CD14-positive monocyte (primary cell): ENCODE measurements at regions of chr14 and their contacts with region 1.

Region 1: GRCh38 chr14:92659765-92660561 is 88.5 kb downstream of the LGMN start:
- DNase-seq: peak; percentile 90 to 96 (median 94)
- H3K4me3 ChIP-seq: peak overlapping the region in 2 of 3 experiments; percentile 6 to 96
- H3K4me3 Mint-ChIP-seq: peak overlapping the region; percentile 56 to 67
- H3K27ac ChIP-seq: peak overlapping the region; percentile 90 to 98
- H3K27ac Mint-ChIP-seq: peak overlapping the region; percentile 100
- H3K4me1 ChIP-seq: peaks cover 91 to 100% of the 10 kb centered on the region in 2 donors
- H3K4me1 Mint-ChIP-seq: peaks cover 91% of the 10 kb centered on the region
- H3K27me3 ChIP-seq: no peaks in the 10 kb centered on the region
- H3K27me3 Mint-ChIP-seq: peaks cover 0 to 2% (median 0%) of the 10 kb centered on the region in 3 donors
- CTCF ChIP-seq: no peak

Region 2: DNA sequence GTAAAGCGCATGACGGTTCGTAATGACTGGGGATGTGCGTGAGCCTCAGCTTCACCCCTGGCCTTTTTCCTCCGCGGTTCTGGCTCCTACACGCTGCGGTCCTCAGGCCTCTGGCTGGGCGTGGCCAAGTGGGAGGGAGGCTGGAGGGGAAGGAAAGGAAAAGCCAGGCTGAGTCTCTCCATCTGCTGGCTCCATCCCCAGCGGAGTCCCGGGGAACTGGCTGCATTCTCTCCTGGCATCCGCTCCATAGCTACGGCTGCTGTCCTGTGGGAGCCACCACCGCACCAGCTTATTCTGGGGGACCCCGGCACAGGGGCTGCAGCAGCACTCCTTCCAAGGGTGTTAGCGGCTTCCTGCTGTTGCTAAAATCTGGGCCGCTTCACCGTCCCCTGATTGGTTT is 405.2 kb before region 1 on chr14:
- intact Hi-C with region 1: no loop called
- DNase-seq: peak in 1 of 3 donors; percentile 32
- H3K4me3 ChIP-seq: peak overlapping the region in 1 of 3 experiments; percentile 44
- H3K4me3 Mint-ChIP-seq: peak overlapping the region; percentile 61 to 73
- H3K27ac ChIP-seq: no peak overlapping the region
- H3K27ac Mint-ChIP-seq: peak overlapping the region in 1 of 7 donors; percentile 63
- H3K4me1 ChIP-seq: peaks cover 34 to 46% of the 10 kb centered on the region in 2 donors
- H3K4me1 Mint-ChIP-seq: peaks cover 46% of the 10 kb centered on the region
- H3K27me3 ChIP-seq: peaks cover 9 to 46% of the 10 kb centered on the region in 2 donors
- H3K27me3 Mint-ChIP-seq: peaks cover 47 to 54% (median 49%) of the 10 kb centered on the region in 3 donors
- CTCF ChIP-seq: no peak

Region 3: GRCh38 chr14:92585981-92586937 is 73.7 kb before region 1 on chr14:
- intact Hi-C with region 1: loop called (anchors 2 to 10 kb)
- DNase-seq: peak; percentile 63 to 87 (median 83)
- H3K4me3 ChIP-seq: no peak overlapping the region
- H3K4me3 Mint-ChIP-seq: no peak overlapping the region
- H3K27ac ChIP-seq: peak overlapping the region; percentile 4 to 66
- H3K27ac Mint-ChIP-seq: peak overlapping the region; percentile 76 to 93 (median 91)
- H3K4me1 ChIP-seq: peaks cover 32 to 39% of the 10 kb centered on the region in 2 donors
- H3K4me1 Mint-ChIP-seq: peaks cover 63% of the 10 kb centered on the region
- H3K27me3 ChIP-seq: no peaks in the 10 kb centered on the region
- H3K27me3 Mint-ChIP-seq: peaks cover 0 to 2% (median 0%) of the 10 kb centered on the region in 3 donors
- CTCF ChIP-seq: no peak